Adrenal gland (tissue), 19 donors: ENCODE measurements at regions of chr10 and their contacts with region 1.

Region 1: DNA sequence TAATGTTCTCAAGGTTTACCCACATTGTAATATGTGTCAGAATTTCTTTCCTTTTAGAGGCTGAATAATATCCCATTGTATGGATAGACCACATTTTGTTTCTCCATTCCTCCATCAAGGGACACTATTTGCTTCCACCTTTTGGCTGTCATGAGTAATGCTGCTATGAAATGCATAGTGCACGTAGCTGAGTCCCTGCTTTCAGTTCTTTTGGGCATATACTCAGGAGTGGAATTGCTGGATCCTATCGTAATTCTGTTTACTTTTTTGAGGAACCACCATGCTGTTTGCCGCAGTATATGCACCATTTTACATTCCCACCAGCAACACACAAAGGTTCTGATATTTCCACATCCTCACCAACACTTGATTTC is 60.0 kb downstream of the PRF1 start:
- DNase-seq: no peak
- H3K4me3 ChIP-seq: no peak overlapping the region
- H3K27ac ChIP-seq: no peak overlapping the region
- H3K4me1 ChIP-seq: no peaks in the 10 kb centered on the region
- H3K27me3 ChIP-seq: no peaks in the 10 kb centered on the region
- CTCF ChIP-seq: no peak
- POLR2A ChIP-seq: no peak

Region 2: GRCh38 chr10:70461215-70461986 is 81.2 kb before region 1 on chr10:
- intact Hi-C with region 1: loop called (anchors 2 kb)
- DNase-seq: peak; percentile 48 to 79 (median 64)
- H3K4me3 ChIP-seq: no peak overlapping the region
- H3K27ac ChIP-seq: no peak overlapping the region
- H3K4me1 ChIP-seq: peaks cover 20 to 22% of the 10 kb centered on the region in 2 donors
- H3K27me3 ChIP-seq: no peaks in the 10 kb centered on the region
- CTCF ChIP-seq: peak; percentile 56 to 87 (median 80)
- POLR2A ChIP-seq: no peak